Endothelial cell of umbilical vein (primary cell): ENCODE measurements at regions of chr9 and their contacts with region 1.

Region 1: GRCh38 chr9:95801797-95802196 is 73.7 kb upstream of the ERCC6L2 start:
- DNase-seq: peak; percentile 67
- H3K4me3 ChIP-seq: peak overlapping the region in 1 of 3 experiments; percentile 12
- H3K27ac ChIP-seq: peak overlapping the region; percentile 59
- H3K4me1 ChIP-seq: peaks cover 25% of the 10 kb centered on the region
- H3K27me3 ChIP-seq: no peaks in the 10 kb centered on the region
- CTCF ChIP-seq: no peak
- POLR2A ChIP-seq: no peak

Region 2: DNA sequence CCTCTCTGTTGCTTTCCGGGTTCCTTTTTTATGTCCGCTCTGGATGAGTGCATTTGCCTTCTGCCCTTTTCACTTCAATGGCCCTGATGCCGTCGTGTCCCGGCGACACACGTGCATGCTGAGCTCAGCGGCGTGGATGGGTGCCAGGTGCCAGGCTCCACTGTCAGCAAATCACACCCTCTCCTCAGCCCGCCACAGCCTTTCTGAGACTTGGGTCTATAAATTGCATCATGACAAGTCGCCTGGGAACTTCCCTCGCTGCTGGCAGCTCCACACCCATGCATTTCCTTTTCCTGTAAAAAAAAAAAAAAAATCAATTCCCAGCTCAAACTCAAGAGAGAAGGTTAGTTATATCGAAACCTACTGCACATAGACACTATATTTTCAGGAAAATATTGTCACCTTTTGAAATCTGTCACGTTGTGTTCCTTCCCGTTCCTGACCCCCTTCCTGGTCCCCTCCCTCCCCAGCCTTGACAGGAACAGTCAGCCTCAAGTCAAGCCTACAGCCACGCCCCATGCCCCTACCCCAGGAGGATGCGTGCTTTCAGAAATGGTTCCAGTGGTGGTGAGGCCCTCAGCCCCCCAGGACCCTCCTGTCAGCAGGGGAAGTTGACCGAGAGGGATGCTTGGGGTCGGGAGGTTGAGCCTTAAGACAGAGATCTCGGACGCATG is 174.8 kb before region 1 on chr9:
- CTCF ChIA-PET with region 1: no interaction called
- POLR2A ChIA-PET with region 1: no interaction called
- dilution Hi-C with region 1: no loop called
- intact Hi-C with region 1: loop called (anchors 5 kb)
- DNase-seq: peak; percentile 71
- H3K4me3 ChIP-seq: peak overlapping the region in 1 of 3 experiments; percentile 18
- H3K27ac ChIP-seq: peak overlapping the region; percentile 82
- H3K4me1 ChIP-seq: peaks cover 23% of the 10 kb centered on the region
- H3K27me3 ChIP-seq: no peaks in the 10 kb centered on the region
- CTCF ChIP-seq: no peak
- POLR2A ChIP-seq: no peak

Region 3: GRCh38 chr9:95816716-95817115 is 14.9 kb after region 1 on chr9:
- CTCF ChIA-PET with region 1: interaction called, 6 read pairs
- POLR2A ChIA-PET with region 1: no interaction called
- dilution Hi-C with region 1: no loop called
- intact Hi-C with region 1: loop called (anchors 1 kb)
- DNase-seq: no peak
- H3K4me3 ChIP-seq: no peak overlapping the region
- H3K27ac ChIP-seq: no peak overlapping the region
- H3K4me1 ChIP-seq: peaks cover 10% of the 10 kb centered on the region
- H3K27me3 ChIP-seq: no peaks in the 10 kb centered on the region
- CTCF ChIP-seq: no peak
- POLR2A ChIP-seq: no peak

Region 4: DNA sequence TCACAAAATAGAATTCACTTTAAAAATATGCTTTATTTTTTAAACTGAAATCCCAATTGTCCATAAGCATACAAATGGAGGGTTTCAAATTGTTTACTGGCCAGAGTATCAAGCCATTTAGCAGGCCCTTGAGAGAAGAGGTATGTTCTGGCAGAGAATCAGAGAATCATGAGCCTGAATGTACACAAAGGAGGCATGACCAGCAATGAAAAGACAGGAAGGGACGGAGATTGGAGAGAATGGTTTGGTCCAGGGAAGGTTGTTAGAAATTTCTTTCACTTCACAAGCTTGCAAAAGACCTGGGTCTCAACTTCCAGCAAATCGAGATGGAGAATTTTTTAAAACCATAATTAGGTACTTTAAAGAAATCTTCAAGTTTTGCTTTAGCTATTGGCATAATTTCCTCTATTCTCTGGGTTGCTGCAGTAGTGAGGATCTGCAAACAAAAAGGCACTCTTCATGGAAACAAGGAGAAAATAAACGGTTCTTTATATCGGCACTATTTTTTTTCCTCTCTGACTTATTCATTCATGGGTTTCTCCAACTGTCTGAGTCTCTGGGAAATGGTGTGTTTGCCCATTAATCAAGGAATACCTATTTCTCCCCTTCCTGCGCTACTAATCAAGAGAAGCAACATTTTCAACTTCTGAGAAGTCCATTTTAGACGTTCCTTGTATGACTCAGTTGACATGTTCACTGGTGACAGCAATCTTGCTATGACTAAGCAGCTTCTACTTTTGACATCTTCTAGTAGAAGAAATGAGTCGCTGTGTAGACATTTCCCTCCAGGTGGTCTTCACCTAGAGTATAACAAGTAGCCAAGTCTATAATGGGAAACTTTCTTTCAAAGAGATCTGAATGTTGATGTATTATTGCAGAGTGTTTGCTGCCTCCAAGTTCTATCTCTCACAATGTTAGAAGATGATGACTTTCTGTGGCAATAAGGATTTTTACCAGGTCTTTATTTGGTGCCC is 50.5 kb after region 1 on chr9:
- CTCF ChIA-PET with region 1: no interaction called
- POLR2A ChIA-PET with region 1: no interaction called
- dilution Hi-C with region 1: no loop called
- intact Hi-C with region 1: loop called (anchors 2 kb)
- DNase-seq: peak; percentile 63
- H3K4me3 ChIP-seq: no peak overlapping the region
- H3K27ac ChIP-seq: peak overlapping the region; percentile 43
- H3K4me1 ChIP-seq: peaks cover 54% of the 10 kb centered on the region
- H3K27me3 ChIP-seq: no peaks in the 10 kb centered on the region
- CTCF ChIP-seq: no peak
- POLR2A ChIP-seq: no peak